WTC11 (cell line): ENCODE measurements at regions of chr17 and their contacts with region 1.

Region 1: GRCh38 chr17:4215882-4216570 is 47.8 kb downstream of the ANKFY1 start:
- DNase-seq: no peak
- ATAC-seq: no peak
- H3K4me3 Mint-ChIP-seq: no peak overlapping the region
- H3K27ac Mint-ChIP-seq: peak overlapping the region; percentile 93
- H3K4me1 Mint-ChIP-seq: peaks cover 24% of the 10 kb centered on the region
- H3K27me3 Mint-ChIP-seq: no peaks in the 10 kb centered on the region
- CTCF ChIP-seq: no peak; the same call in 1 of the 2 replicates

Region 2: DNA sequence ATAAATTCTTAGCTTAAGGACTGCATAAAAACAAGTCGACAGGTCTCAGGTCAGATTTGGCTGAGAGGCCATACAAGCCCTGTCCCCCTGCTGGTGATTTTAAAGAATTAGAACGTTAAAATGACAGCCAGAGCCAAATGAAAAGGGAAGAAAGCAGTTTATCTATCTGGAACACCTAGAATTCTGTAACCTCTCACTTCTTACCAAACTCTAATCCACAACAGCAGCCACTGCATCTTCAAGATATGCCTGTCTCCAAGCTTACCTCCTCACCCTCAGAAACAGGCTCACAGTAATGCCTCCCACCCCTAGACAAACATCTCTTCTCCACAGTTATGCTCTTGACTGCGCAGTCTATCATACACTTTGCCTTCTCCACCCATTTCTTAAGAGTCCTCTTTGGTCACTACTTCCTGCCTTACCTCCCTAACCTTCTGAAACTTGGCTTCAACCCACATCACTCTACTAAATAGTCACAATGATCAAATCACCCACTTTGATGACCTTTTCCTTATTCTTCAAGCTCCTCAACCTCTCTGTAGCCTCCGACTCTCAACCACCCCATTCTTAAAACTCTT is 33.5 kb after region 1 on chr17:
- CTCF ChIA-PET with region 1: interaction called, 33 read pairs
- POLR2A ChIA-PET with region 1: no interaction called
- DNase-seq: no peak
- ATAC-seq: peak; percentile 27; the same call in 1 of the 2 replicates
- H3K4me3 Mint-ChIP-seq: no peak overlapping the region
- H3K27ac Mint-ChIP-seq: peak overlapping the region; percentile 55
- H3K4me1 Mint-ChIP-seq: peaks cover 34% of the 10 kb centered on the region
- H3K27me3 Mint-ChIP-seq: no peaks in the 10 kb centered on the region
- CTCF ChIP-seq: 0 out of 2 replicates have a peak, but pooled peaks have one; percentile 18

Region 3: DNA sequence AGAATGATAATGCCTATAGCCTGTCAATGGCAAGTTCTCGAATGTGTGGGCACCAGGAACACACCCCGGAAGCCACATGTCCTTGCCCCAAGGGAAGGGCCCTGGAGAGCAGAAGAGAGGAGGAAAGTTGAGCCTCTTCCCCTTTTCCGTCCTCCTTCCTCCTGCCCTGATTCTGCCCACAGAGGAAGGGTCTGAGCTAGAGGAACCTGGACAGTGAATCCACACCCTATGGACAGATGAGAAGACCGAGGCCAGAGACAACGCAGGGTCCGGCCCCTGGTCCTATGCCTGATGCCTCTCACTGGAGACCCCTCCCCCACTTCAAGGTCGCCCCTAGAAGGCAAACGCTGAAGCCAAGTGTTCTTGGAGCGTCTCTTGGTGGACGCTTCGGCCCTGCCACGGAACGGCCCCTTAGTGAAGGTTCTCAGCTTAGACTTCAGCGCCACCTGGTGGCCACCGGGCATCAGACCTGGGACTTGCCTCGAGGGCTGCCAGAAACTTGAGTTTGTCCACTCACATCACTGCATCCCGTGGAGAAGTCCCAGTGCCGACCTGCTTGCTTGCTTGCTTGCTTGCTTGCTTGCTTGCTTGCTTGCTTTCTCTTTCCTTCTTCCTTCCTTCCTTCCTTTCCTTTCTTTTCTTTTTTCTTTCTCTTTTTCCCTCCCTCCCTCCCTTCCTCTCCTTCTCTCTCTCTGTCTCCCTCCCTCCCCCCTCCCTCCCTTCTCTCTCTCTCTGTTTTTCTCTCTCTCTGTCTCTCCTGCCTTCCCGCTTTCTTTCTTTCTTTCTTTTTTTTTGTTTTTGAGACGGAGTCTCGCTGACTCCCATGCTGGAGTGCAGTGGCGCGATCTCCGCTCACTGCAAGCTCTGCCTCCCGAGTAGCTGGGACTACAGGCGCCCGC is 197.2 kb after region 1 on chr17:
- CTCF ChIA-PET with region 1: interaction called, 32 read pairs
- POLR2A ChIA-PET with region 1: no interaction called
- DNase-seq: peak; percentile 98
- ATAC-seq: peak; percentile 96
- H3K4me3 Mint-ChIP-seq: peak overlapping the region; percentile 35
- H3K27ac Mint-ChIP-seq: 0 out of 2 replicates have a peak overlapping the region, but pooled peaks have one; percentile 40
- H3K4me1 Mint-ChIP-seq: peaks cover 7% of the 10 kb centered on the region
- H3K27me3 Mint-ChIP-seq: no peaks in the 10 kb centered on the region
- CTCF ChIP-seq: peak; percentile 94